Activated CD8-positive, alpha-beta T cell treated with anti-CD3 and anti-CD28 coated beads for 36 hours (primary cell): ENCODE measurements at regions of chr1 and their contacts with region 1.

Region 1: GRCh38 chr1:204806943-204807687 is 63.5 kb upstream of the NFASC start:
- DNase-seq: peak; percentile 91
- ATAC-seq: peak; percentile 95
- H3K4me3 Mint-ChIP-seq: peak overlapping the region; percentile 76
- H3K27ac Mint-ChIP-seq: peak overlapping the region; percentile 73
- H3K4me1 Mint-ChIP-seq: peaks cover 11% of the 10 kb centered on the region
- H3K27me3 Mint-ChIP-seq: no peaks in the 10 kb centered on the region
- CTCF ChIP-seq: peak; percentile 6

Region 2: GRCh38 chr1:203504397-203505250 is 1302.5 kb before region 1 on chr1:
- CTCF ChIA-PET with region 1: no interaction called
- POLR2A ChIA-PET with region 1: no interaction called
- intact Hi-C with region 1: no loop called
- DNase-seq: peak; percentile 89
- ATAC-seq: peak; percentile 81
- H3K4me3 Mint-ChIP-seq: no peak overlapping the region
- H3K27ac Mint-ChIP-seq: no peak overlapping the region
- H3K4me1 Mint-ChIP-seq: no peaks in the 10 kb centered on the region
- H3K27me3 Mint-ChIP-seq: no peaks in the 10 kb centered on the region
- CTCF ChIP-seq: peak; percentile 98

Region 3: DNA sequence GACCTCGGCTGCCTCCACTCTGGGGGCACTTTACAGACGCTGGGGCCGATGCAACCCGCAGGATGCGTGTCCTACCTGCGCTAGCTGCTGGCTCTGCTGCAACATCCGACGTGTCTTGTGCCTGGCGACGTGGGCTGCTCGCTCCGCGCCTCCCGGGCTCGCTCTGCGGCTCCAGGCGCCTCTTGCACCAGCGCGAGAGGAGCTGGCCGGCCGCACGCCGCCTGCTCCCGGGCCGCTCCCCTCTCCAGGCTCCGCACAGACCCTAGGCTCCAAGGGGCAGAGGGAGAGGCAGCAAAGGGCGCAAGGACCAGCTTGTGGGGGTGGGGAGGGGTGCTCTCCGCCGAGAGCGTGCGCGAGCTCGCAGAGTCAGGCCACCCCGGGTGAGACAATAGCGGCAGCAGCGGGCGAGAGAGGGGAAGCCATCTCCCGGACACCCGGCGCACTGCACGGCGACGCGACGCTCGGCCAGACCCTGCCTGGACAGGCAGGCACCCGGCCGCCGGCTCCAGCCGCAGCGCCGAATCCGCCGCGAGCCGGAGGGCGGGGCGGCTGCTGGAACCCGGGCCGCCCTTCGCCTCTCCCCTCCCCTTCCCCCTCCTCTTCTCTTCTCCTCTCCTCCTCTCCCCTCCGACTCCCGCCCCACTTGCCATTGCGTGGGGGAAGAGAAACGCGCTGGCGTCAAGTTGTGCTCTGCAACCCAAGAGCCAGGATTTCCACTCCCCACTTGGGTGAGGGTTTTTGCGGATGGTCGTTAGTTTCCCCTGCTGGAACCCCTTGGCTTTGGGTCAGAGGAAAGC is 312.6 kb before region 1 on chr1 and contains the start of gene PIK3C2B:
- CTCF ChIA-PET with region 1: interaction called, 12 read pairs
- POLR2A ChIA-PET with region 1: no interaction called
- intact Hi-C with region 1: no loop called
- DNase-seq: peak; percentile 81
- ATAC-seq: peak; percentile 80
- H3K4me3 Mint-ChIP-seq: peak within 1 kb of the TSS; percentile 88
- H3K27ac Mint-ChIP-seq: peak within 1 kb of the TSS; percentile 94
- H3K4me1 Mint-ChIP-seq: peaks cover 46% of the 10 kb centered on the region
- H3K27me3 Mint-ChIP-seq: no peaks in the 10 kb centered on the region
- CTCF ChIP-seq: peak; percentile 58
- total RNA-seq, gene PIK3C2B: 26.6 to 28.9 TPM

Region 4: DNA sequence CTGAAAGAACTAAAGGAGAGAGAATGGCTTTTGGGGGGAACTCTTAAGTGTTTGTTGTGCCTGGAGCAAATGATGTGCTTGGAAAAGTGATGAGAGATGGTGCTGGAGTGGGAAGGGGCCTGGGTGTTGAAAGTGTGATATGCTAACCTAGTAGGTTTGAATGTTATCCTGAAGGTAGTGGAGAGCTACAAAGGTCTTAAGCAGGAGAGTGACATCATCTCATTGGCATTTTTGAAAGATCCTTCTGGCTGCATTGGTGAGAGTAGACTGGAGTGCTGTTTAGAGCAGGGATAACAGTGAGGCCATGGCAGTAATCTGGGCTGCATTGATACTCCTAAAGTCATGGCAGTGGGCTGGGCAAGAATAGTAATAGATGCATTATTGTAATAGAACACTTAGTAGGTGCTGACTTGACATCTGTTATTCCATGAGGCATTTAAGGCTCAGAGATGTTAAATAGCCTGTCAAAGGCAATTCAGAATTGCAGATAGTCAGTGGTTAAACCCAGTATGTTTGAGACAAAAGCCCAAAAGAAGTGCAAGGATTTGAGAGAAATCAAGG is 246.4 kb before region 1 on chr1:
- CTCF ChIA-PET with region 1: interaction called, 176 read pairs
- POLR2A ChIA-PET with region 1: interaction called, 4 read pairs
- intact Hi-C with region 1: no loop called
- DNase-seq: no peak
- ATAC-seq: no peak
- H3K4me3 Mint-ChIP-seq: no peak overlapping the region
- H3K27ac Mint-ChIP-seq: peak overlapping the region; percentile 9
- H3K4me1 Mint-ChIP-seq: peaks cover 55% of the 10 kb centered on the region
- H3K27me3 Mint-ChIP-seq: no peaks in the 10 kb centered on the region
- CTCF ChIP-seq: no peak

Region 5: DNA sequence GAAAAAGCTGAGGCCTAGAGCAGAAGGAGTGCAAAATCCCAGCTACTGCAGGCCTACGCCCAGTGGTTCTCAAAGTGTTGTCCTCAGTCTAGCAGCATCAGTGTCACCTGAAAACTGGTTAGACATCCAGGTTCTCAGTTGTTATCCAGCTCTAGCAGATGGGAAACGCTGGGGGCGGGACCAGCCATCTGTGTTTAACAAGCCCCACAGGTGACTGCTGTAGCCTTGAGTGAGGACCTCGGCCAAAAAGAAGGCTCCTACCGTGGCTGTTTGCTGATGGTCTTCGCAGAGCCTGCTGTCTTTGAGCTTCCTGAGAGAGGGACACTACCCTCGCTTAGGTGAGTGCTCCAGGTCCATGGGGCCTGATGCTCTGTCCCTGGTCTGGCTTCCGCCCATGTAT is 191.2 kb before region 1 on chr1:
- CTCF ChIA-PET with region 1: interaction called, 13 read pairs
- POLR2A ChIA-PET with region 1: no interaction called
- intact Hi-C with region 1: no loop called
- DNase-seq: no peak
- ATAC-seq: no peak
- H3K4me3 Mint-ChIP-seq: no peak overlapping the region
- H3K27ac Mint-ChIP-seq: no peak overlapping the region
- H3K4me1 Mint-ChIP-seq: no peaks in the 10 kb centered on the region
- H3K27me3 Mint-ChIP-seq: no peaks in the 10 kb centered on the region
- CTCF ChIP-seq: no peak

Region 6: DNA sequence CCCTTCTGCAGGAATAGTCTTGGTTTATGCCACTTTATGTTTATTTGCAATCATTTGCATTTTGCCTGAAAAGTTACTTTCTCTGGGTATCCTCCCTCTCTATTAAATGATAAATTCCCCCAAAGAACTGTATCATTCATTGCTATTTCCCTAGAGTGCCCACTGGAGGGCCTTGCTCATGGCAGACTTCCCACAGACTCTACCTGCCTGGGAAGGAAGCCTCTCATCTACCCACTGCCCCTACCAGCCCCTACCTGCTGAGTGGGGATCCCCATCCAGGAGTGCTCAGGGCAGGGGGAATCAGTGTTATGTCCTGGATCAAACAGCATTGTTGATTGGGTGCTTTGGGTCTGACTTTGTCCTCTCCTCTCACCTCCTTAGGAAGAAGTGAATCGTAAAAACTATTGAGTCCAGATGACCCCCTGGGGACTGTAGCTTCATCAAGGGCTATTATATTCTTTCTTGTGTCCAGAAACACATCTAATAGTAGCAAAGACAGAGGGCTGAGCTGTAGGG is 114.7 kb before region 1 on chr1:
- CTCF ChIA-PET with region 1: interaction called, 12 read pairs
- POLR2A ChIA-PET with region 1: no interaction called
- intact Hi-C with region 1: no loop called
- DNase-seq: no peak
- ATAC-seq: no peak
- H3K4me3 Mint-ChIP-seq: no peak overlapping the region
- H3K27ac Mint-ChIP-seq: no peak overlapping the region
- H3K4me1 Mint-ChIP-seq: peaks cover 7% of the 10 kb centered on the region
- H3K27me3 Mint-ChIP-seq: peaks cover 10% of the 10 kb centered on the region
- CTCF ChIP-seq: no peak

Region 7: GRCh38 chr1:204769997-204770396 is 37.1 kb before region 1 on chr1:
- CTCF ChIA-PET with region 1: interaction called, 14 read pairs
- POLR2A ChIA-PET with region 1: no interaction called
- intact Hi-C with region 1: no loop called
- DNase-seq: no peak
- ATAC-seq: no peak
- H3K4me3 Mint-ChIP-seq: no peak overlapping the region
- H3K27ac Mint-ChIP-seq: no peak overlapping the region
- H3K4me1 Mint-ChIP-seq: no peaks in the 10 kb centered on the region
- H3K27me3 Mint-ChIP-seq: peaks cover 6% of the 10 kb centered on the region
- CTCF ChIP-seq: no peak

Region 8: GRCh38 chr1:204828338-204828850 is 21.3 kb after region 1 on chr1:
- CTCF ChIA-PET with region 1: interaction called, 116 read pairs
- POLR2A ChIA-PET with region 1: no interaction called
- intact Hi-C with region 1: no loop called
- DNase-seq: peak; percentile 56
- ATAC-seq: peak; percentile 86
- H3K4me3 Mint-ChIP-seq: no peak overlapping the region
- H3K27ac Mint-ChIP-seq: no peak overlapping the region
- H3K4me1 Mint-ChIP-seq: peaks cover 4% of the 10 kb centered on the region
- H3K27me3 Mint-ChIP-seq: peaks cover 42% of the 10 kb centered on the region
- CTCF ChIP-seq: no peak